Motor neuron (in vitro differentiated cells): ENCODE measurements at regions of chr9 and their contacts with region 1.

Region 1: GRCh38 chr9:13427587-13427986 is 148.1 kb upstream of the MPDZ start:
- ATAC-seq: no peak
- H3K4me3 ChIP-seq: no peak overlapping the region
- H3K27ac ChIP-seq: no peak overlapping the region
- H3K4me1 ChIP-seq: peaks cover 16 to 20% of the 10 kb centered on the region in 2 donors

Region 2: DNA sequence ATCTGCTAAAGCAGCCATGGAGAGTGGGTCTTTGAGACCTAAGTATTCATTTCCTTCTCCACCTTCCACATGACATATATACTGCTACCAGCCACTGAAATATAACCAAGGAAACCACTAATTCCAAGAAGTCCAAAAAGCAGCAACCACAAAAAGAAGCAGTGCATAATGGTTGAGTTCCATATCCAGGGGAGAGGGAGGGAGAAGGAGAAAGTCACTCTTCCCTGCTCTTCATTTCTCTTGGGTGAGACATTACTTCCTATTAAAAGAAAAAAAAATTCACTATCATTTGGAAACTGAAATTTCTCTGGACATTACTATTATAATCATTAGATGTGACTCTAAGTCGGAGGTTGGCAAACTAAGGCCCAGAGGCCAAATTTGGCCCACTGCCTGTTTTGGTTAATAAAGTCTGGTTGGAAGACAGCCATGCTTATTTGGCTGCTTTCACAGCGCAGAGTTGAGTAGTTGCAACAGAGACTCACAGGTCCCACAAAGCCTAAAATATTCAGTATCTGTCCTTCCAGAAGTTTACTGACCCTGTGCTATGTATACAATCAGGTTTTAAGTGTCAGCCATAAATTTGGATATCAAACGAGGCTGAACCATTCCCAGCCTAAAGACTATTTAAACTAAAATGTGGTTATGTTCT is 316.7 kb before region 1 on chr9:
- in situ Hi-C with region 1: no loop called
- ATAC-seq: peak in 3 of 8 experiments; percentile 7 to 73 (median 44)
- H3K4me3 ChIP-seq: no peak overlapping the region
- H3K27ac ChIP-seq: no peak overlapping the region
- H3K4me1 ChIP-seq: no peaks in the 10 kb centered on the region

Region 3: GRCh38 chr9:13688994-13689600 is 261.5 kb after region 1 on chr9:
- in situ Hi-C with region 1: loop called in 1 of 9 experiments (anchors 10 kb)
- ATAC-seq: peak in 4 of 8 experiments; percentile 18 to 50 (median 46)
- H3K4me3 ChIP-seq: no peak overlapping the region
- H3K27ac ChIP-seq: no peak overlapping the region
- H3K4me1 ChIP-seq: peaks cover 0 to 3% of the 10 kb centered on the region in 2 donors

Region 4: DNA sequence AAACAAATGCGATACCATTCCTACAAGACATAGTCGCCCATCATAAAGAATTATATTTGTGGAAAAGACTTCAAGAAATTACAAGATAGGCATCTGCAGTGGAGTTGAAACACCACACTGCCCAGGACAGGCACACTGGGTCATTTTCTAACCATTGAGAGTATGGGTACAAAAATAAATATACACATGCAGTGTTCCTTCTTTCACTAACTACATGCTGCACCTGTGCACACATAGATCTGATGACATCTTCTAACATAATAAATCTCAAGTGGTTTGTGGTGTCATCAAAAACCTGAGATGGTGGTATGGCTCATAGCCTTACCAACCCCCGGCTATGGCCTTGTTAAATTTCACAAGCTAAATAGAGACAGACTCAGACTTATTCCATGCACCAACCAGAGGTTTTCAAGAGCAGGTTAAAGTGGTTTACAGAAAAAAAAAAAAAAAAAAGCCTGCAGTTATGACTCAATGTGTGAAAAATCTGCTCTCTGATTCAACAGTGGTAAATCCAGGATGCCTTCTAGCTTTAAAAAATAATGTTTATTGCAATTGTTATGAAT is 898.8 kb after region 1 on chr9:
- in situ Hi-C with region 1: loop called in 1 of 9 experiments (anchors 25 kb)
- ATAC-seq: peak in 1 of 8 experiments; percentile 1
- H3K4me3 ChIP-seq: no peak overlapping the region
- H3K27ac ChIP-seq: no peak overlapping the region
- H3K4me1 ChIP-seq: no peaks in the 10 kb centered on the region

Region 5: GRCh38 chr9:14353222-14354056 is 925.9 kb after region 1 on chr9:
- in situ Hi-C with region 1: loop called in 5 of 9 experiments (anchors 25 kb)
- ATAC-seq: peak; percentile 74 to 99 (median 98)
- H3K4me3 ChIP-seq: no peak overlapping the region
- H3K27ac ChIP-seq: no peak overlapping the region
- H3K4me1 ChIP-seq: peaks cover 5 to 12% of the 10 kb centered on the region in 2 donors